IMR-90 (cell line): ENCODE measurements at regions of chr16 and their contacts with region 1.

Region 1: GRCh38 chr16:9090960-9091866 is at the start of gene HAPSTR1:
- DNase-seq: peak; percentile 100
- ATAC-seq: peak; percentile 94
- H3K4me3 ChIP-seq: peak within 1 kb of the TSS; percentile 93
- H3K27ac ChIP-seq: peak within 1 kb of the TSS; percentile 98
- H3K4me1 ChIP-seq: no peaks in the 10 kb centered on the region; the same call in 1 of the 2 replicates
- H3K27me3 ChIP-seq: no peaks in the 10 kb centered on the region
- CTCF ChIP-seq: no peak
- POLR2A ChIP-seq: peak; percentile 98
- RAD21 ChIP-seq: no peak
- total RNA-seq, gene HAPSTR1: 56.5 and 81.9 TPM in 2 replicates

Region 2: GRCh38 chr16:8452941-8453340 is 638.3 kb before region 1 on chr16:
- CTCF ChIA-PET with region 1: no interaction called
- POLR2A ChIA-PET with region 1: no interaction called
- dilution Hi-C with region 1: no loop called
- in situ Hi-C with region 1: no loop called
- intact Hi-C with region 1: no loop called
- DNase-seq: no peak
- ATAC-seq: no peak
- H3K4me3 ChIP-seq: no peak overlapping the region
- H3K27ac ChIP-seq: no peak overlapping the region
- H3K4me1 ChIP-seq: no peaks in the 10 kb centered on the region
- H3K27me3 ChIP-seq: no peaks in the 10 kb centered on the region
- CTCF ChIP-seq: no peak
- POLR2A ChIP-seq: no peak
- RAD21 ChIP-seq: no peak

Region 3: DNA sequence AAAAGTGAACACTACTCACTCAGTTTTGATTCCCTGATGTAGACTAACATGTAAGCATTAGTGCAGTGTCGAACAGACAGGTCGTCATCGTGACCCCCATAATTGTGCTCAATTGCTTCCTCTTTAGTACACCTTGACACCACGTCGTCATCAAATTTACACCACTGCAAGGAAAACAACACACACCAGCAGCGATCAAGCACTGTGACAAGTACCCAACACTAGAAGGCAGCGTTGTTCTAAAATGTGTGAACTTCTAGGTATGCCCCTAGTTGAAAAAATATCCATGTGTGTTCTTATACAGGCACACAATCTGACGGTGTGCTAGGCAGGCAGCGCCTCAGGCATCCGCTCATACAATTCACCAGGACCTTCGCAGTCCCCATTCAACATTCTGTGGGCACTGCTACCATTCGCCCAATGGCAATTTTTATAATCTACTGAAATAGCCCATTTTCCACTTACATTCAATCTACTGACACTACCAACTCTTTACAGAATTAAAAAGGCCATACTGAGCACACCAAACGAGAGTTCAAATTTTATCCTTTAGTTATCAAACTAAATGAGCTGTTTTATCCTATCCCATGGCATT is 185.9 kb before region 1 on chr16:
- CTCF ChIA-PET with region 1: no interaction called
- POLR2A ChIA-PET with region 1: no interaction called
- dilution Hi-C with region 1: no loop called
- in situ Hi-C with region 1: no loop called
- intact Hi-C with region 1: loop called (anchors 10 kb)
- DNase-seq: peak; percentile 45
- ATAC-seq: peak; percentile 72
- H3K4me3 ChIP-seq: no peak overlapping the region
- H3K27ac ChIP-seq: no peak overlapping the region
- H3K4me1 ChIP-seq: no peaks in the 10 kb centered on the region
- H3K27me3 ChIP-seq: no peaks in the 10 kb centered on the region
- CTCF ChIP-seq: peak; percentile 49
- POLR2A ChIP-seq: no peak
- RAD21 ChIP-seq: peak; percentile 58

Region 4: DNA sequence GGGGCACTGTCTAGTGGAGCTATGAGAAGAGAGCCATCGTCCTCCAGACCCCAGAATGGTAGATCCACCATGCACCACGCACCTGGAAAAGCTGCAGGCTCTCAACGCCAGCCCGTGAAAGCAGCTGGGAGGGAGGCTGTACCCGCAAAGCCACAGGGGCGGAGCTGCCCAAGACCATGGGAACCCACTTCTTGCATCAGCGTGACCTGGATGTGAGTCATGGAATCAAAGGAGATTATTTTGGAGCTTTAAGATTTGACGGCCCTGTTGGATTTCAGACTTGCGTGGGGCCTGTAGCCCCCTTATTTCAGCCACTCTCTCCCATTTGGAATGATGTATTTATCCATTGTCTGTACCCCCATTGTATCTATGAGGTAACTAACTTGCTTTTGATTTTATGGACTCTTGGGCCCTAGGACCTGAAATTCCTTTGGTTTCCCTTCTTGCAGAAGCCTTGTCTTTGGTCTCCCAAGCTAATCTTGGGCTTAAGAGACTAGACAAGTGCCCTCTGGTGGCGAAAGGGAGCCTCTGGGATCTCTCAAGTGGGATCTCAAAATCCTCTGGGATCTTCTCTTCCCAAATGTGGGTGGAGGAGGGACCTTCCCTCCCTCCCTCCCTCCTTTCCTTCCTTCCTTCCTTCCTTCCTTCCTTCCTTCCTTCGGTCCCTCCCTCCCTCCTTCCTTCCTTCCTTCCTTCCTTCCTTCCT is 57.9 kb before region 1 on chr16:
- CTCF ChIA-PET with region 1: no interaction called
- POLR2A ChIA-PET with region 1: no interaction called
- dilution Hi-C with region 1: no loop called
- in situ Hi-C with region 1: no loop called
- intact Hi-C with region 1: loop called (anchors 5 kb)
- DNase-seq: peak; percentile 71
- ATAC-seq: peak; percentile 73; the same call in 1 of the 2 replicates
- H3K4me3 ChIP-seq: no peak overlapping the region
- H3K27ac ChIP-seq: no peak overlapping the region
- H3K4me1 ChIP-seq: no peaks in the 10 kb centered on the region
- H3K27me3 ChIP-seq: peaks cover 2% of the 10 kb centered on the region; the same call in 1 of the 2 replicates
- CTCF ChIP-seq: peak; percentile 57
- POLR2A ChIP-seq: no peak
- RAD21 ChIP-seq: peak; percentile 49

Region 5: DNA sequence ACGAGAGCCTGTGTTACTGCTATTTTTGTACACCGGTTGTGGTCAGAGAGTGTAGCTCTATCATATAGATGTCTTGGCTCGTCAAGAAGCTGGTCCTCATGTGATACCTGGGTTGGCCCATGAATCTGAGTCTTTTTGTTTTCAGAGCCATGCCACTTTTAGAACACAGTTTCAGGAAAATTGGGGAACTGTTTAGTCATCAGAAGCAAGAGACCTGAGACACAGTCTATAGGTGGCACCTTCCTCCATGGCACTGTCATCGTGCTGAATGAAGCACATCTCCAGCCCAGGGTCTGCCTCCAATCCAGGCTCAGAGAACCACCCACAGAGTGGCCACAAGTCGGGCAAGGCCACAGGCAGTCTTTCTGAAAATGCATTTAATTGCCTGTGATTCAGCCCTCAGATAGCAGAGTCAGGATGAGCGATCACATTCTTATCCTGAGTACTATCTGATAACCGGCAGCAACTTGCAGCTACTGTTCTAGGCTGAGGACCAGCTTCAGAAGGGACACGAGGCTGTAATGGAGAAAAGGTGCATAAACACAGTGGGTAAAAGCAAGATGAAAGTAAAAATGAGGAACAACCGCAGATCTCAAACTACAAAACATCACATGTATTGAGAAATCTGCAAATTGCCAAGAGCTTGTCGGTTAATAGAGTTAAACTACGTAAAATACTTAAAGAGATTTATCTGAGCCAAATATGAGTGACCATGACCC is 14.0 kb before region 1 on chr16:
- CTCF ChIA-PET with region 1: no interaction called
- POLR2A ChIA-PET with region 1: interaction called, 14 read pairs
- dilution Hi-C with region 1: no loop called
- in situ Hi-C with region 1: no loop called
- intact Hi-C with region 1: no loop called
- DNase-seq: peak; percentile 88
- ATAC-seq: peak; percentile 70
- H3K4me3 ChIP-seq: no peak overlapping the region
- H3K27ac ChIP-seq: peak overlapping the region; percentile 19
- H3K4me1 ChIP-seq: peaks cover 20% of the 10 kb centered on the region
- H3K27me3 ChIP-seq: no peaks in the 10 kb centered on the region
- CTCF ChIP-seq: no peak
- POLR2A ChIP-seq: no peak
- RAD21 ChIP-seq: no peak; the same call in 1 of the 2 replicates

Region 6: DNA sequence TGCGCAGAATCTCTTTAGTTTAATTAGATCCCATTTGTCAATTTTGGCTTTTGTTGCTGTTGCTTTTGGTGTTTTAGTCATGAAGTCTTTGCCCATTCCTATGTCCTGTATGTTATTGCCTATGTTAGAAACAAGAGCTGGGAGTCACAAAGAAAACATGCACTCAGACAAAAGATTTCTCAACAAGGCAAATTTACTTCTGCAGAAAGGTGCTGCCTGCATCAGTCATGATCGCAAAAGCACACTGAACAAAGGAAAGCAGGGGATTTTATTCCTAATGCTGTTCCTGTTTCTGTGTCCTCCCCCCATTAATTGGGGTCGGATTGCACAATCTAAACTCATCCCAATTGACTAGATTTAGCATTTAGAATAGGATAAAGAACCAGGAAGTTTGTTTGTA is 1350.5 kb after region 1 on chr16:
- CTCF ChIA-PET with region 1: no interaction called
- POLR2A ChIA-PET with region 1: interaction called, 18 read pairs
- dilution Hi-C with region 1: no loop called
- in situ Hi-C with region 1: no loop called
- intact Hi-C with region 1: no loop called
- DNase-seq: no peak
- ATAC-seq: no peak
- H3K4me3 ChIP-seq: no peak overlapping the region
- H3K27ac ChIP-seq: no peak overlapping the region
- H3K4me1 ChIP-seq: no peaks in the 10 kb centered on the region
- H3K27me3 ChIP-seq: no peaks in the 10 kb centered on the region
- CTCF ChIP-seq: no peak
- POLR2A ChIP-seq: no peak
- RAD21 ChIP-seq: no peak